ENCODE measurements at regions of chr5 and their contacts with region 1.

Region 1: DNA sequence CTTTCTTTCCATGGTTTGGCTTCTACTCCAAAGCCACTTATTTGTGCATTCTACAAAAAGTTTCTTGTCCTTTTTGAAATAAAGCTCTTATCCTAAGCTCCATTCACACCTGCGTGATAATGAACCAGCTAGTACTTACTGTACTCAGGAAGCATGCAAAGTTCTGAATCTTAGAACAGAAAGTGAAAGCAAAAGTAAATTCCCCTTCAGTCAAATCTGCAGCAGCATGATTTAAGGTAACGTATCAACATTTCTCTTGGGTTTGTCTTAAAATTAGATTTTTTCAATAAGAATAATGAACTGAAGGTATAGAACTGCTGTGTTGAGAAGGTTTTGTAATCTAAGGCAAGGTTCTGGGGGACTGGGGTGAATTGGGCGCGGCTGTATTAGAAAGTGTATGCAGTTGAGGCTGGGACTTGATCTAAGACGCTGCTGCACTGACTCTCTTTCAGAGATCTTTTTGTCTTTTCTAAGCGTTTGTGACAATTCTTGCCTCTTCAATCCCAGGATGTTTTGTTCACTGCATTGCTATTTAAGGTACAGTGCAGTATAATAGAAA is at the start of gene ERAP2:
- DNase-seq: peak; percentile 34
- H3K4me3 Mint-ChIP-seq: peak within 1 kb of the TSS; percentile 95
- H3K27ac Mint-ChIP-seq: peak within 1 kb of the TSS; percentile 88
- H3K4me1 Mint-ChIP-seq: peaks cover 72% of the 10 kb centered on the region
- H3K27me3 Mint-ChIP-seq: no peaks in the 10 kb centered on the region
- total RNA-seq, gene ERAP2: 91.3 to 93.9 TPM

Region 2: DNA sequence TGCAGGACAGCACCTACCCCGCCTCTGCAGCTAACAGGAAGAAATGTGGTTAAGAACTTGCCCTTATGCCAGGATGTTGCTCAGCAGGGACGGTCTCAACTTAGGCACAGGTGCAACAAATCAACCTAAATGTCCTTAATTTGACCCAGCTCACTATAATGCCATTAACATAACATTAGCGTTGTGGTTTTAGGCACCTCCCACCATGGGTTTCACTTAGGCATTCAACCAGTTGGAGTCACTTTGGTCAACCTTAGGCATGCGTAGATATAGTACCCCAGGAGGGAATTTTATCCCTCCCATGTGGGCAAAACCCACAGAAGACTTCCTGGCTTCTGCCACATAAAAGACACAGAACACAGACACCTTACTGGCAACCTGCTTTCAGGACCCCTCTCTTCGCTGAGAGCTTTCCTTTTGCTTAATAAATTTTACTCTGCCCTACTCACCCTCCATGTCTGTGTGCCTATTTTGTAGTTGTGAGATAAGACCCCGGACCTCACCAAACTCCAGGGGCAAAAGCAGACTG is 59.9 kb before region 1 on chr5:
- CTCF ChIA-PET with region 1: interaction called, 3 read pairs
- POLR2A ChIA-PET with region 1: interaction called, 12 read pairs
- DNase-seq: peak; percentile 67
- H3K4me3 Mint-ChIP-seq: peak overlapping the region; percentile 77
- H3K27ac Mint-ChIP-seq: peak overlapping the region; percentile 84
- H3K4me1 Mint-ChIP-seq: peaks cover 47% of the 10 kb centered on the region
- H3K27me3 Mint-ChIP-seq: no peaks in the 10 kb centered on the region

Region 3: DNA sequence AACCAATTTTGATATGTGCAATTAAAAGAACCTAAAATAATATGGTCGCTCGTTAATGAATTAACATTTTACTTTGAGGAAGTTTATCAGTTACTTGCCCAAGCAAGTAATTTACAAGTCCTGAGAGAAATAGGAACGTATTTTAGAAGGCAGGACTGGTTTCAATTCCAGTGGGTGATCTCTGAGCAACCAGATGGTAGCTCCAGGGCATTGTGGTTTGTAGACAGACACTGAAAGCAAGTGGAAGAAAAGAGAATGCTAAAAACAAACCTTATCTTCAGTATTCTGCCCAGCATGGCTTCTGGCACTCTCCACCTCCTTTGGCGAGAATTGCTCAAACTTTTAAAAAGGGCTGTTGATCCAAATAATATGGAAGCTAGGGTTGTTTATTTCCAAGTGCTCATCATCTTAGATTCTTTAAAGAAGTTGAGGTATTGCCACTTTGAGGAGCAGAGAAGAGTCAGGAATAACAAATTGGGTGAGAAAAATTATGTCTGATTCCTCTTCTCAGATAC is 31.8 kb before region 1 on chr5:
- CTCF ChIA-PET with region 1: no interaction called
- POLR2A ChIA-PET with region 1: no interaction called
- DNase-seq: no peak
- H3K4me3 Mint-ChIP-seq: no peak overlapping the region
- H3K27ac Mint-ChIP-seq: no peak overlapping the region
- H3K4me1 Mint-ChIP-seq: peaks cover 12% of the 10 kb centered on the region
- H3K27me3 Mint-ChIP-seq: peaks cover 17% of the 10 kb centered on the region

Region 4: DNA sequence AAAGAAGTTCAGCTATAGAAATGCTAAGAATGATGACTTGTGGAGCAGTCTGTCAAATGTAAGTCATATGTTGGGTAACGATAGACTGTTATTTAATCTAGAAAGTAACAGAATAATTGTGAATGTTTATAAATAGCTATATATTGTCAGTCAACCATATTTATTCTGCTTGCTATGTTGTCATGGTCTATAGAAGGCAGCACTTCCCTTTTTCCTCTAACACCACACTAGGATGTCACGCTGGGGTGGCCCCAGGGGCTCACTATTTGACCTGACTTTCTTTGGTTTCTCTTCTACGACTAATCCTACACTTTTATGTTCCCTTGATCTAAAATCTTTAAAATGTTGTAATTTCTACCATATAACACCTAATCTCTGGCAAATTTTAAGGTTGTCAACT is 20.4 kb after region 1 on chr5:
- CTCF ChIA-PET with region 1: interaction called, 11 read pairs
- POLR2A ChIA-PET with region 1: interaction called, 50 read pairs
- DNase-seq: no peak
- H3K4me3 Mint-ChIP-seq: peak overlapping the region; percentile 67
- H3K27ac Mint-ChIP-seq: peak overlapping the region; percentile 87
- H3K4me1 Mint-ChIP-seq: peaks cover 47% of the 10 kb centered on the region
- H3K27me3 Mint-ChIP-seq: no peaks in the 10 kb centered on the region

Region 5: GRCh38 chr5:96934708-96935558 is 58.6 kb after region 1 on chr5:
- CTCF ChIA-PET with region 1: interaction called, 3 read pairs
- POLR2A ChIA-PET with region 1: interaction called, 72 read pairs
- DNase-seq: peak; percentile 97
- H3K4me3 Mint-ChIP-seq: peak overlapping the region; percentile 80
- H3K27ac Mint-ChIP-seq: peak overlapping the region; percentile 96
- H3K4me1 Mint-ChIP-seq: peaks cover 48% of the 10 kb centered on the region
- H3K27me3 Mint-ChIP-seq: no peaks in the 10 kb centered on the region

Region 6: GRCh38 chr5:96963267-96963666 is 86.9 kb after region 1 on chr5:
- CTCF ChIA-PET with region 1: no interaction called
- POLR2A ChIA-PET with region 1: interaction called, 10 read pairs
- DNase-seq: peak; percentile 36
- H3K4me3 Mint-ChIP-seq: no peak overlapping the region
- H3K27ac Mint-ChIP-seq: peak overlapping the region; percentile 74
- H3K4me1 Mint-ChIP-seq: peaks cover 56% of the 10 kb centered on the region
- H3K27me3 Mint-ChIP-seq: no peaks in the 10 kb centered on the region

Region 7: DNA sequence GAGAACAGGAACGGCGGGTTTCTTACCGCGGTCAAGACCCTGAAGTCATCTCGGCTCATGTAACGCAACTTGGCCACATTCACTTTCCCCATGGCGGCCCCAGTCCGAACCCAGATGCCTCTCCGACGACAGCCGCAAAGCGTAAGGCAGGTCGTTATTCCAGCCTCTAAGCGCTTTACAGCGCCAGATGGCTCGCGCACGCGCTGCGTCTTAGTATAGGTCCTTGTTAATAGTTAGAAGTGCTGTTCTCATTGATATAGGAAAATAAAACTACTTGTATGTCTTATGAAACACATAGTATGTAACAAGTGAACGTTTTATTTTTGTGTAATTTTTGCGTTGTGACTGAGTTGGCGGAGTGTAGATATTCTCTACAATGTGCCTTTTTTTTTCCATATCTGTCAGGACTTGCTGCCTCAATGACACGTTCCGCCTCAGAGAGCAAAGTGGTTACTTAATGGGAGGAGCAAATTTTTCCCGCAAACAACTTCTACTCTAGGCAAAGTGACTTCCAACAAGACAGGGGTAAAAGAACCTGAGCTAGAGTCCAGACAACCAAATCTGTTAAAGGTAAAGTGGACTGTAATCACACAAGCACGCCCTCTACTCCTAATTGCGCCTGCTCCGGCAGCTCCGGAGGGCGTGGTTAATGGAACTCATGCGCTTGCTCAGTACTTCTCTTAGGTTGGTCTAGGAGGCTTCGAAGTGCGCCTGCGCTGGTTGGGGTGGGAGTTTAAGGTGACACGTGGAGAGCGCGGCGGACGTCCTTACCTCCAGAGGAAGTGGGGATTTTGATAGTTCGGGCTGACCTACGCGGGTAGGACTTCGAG is 306.9 kb after region 1 on chr5 and contains the start of gene RIOK2:
- CTCF ChIA-PET with region 1: no interaction called
- POLR2A ChIA-PET with region 1: interaction called, 10 read pairs
- DNase-seq: peak; percentile 93
- H3K4me3 Mint-ChIP-seq: peak within 1 kb of the TSS; percentile 90
- H3K27ac Mint-ChIP-seq: peak within 1 kb of the TSS; percentile 96
- H3K4me1 Mint-ChIP-seq: peaks cover 34% of the 10 kb centered on the region
- H3K27me3 Mint-ChIP-seq: peaks cover 6% of the 10 kb centered on the region
- total RNA-seq, gene RIOK2: 24.9 to 26.7 TPM

Region 8: GRCh38 chr5:97208714-97209113 is 332.3 kb after region 1 on chr5:
- CTCF ChIA-PET with region 1: no interaction called
- POLR2A ChIA-PET with region 1: no interaction called
- DNase-seq: no peak
- H3K4me3 Mint-ChIP-seq: no peak overlapping the region
- H3K27ac Mint-ChIP-seq: no peak overlapping the region
- H3K4me1 Mint-ChIP-seq: no peaks in the 10 kb centered on the region
- H3K27me3 Mint-ChIP-seq: peaks cover 22% of the 10 kb centered on the region